Lower leg skin (tissue), 4 donors: ENCODE measurements at regions of chr7 and their contacts with region 1.

Region 1: GRCh38 chr7:14233076-14233867 is 243.8 kb upstream of the ETV1 start:
- DNase-seq: no peak
- H3K4me3 ChIP-seq: no peak overlapping the region
- CTCF ChIP-seq: no peak
- POLR2A ChIP-seq: no peak

Region 2: DNA sequence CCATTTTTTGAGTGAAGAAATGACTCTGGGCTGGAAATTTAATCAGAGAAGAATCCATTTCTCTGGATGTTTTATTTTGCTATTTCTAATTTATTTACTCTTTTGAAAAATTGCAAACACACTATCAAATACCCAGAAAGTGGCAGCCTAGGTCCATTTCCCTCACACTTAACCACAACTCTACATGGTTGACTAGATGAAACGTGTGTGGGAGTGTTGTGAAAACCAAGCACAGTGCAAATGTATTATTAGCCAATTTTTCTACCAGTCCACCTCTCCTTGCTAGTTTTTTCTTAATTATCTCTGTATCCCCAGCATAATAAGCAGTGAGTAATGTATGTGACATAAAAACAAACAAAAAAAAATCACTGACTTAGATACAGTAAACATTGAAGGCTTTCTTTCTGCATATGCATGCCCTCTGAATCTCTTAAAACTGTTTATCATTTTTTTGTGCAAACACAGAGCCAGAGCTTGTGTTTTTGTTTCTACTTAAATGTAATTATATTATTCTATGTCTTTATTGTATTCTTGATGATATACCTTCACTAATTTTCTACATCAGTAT is 1631.9 kb before region 1 on chr7:
- intact Hi-C with region 1: loop called (anchors 10 kb)
- DNase-seq: no peak
- H3K4me3 ChIP-seq: no peak overlapping the region
- CTCF ChIP-seq: no peak
- POLR2A ChIP-seq: no peak

Region 3: GRCh38 chr7:14377646-14378266 is 144.5 kb after region 1 on chr7:
- intact Hi-C with region 1: no loop called
- DNase-seq: no peak
- H3K4me3 ChIP-seq: no peak overlapping the region
- CTCF ChIP-seq: no peak
- POLR2A ChIP-seq: no peak

Region 4: GRCh38 chr7:16223963-16224707 is 1990.9 kb after region 1 on chr7:
- intact Hi-C with region 1: loop called (anchors 5 kb)
- DNase-seq: no peak
- H3K4me3 ChIP-seq: no peak overlapping the region
- CTCF ChIP-seq: no peak
- POLR2A ChIP-seq: no peak